ENCODE measurements at regions of chr11 and their contacts with region 1.

Region 1: GRCh38 chr11:61899146-61899841 is 7.9 kb upstream of the FADS3 start:
- DNase-seq: peak; percentile 90
- H3K4me3 ChIP-seq: no peak overlapping the region
- H3K27ac ChIP-seq: no peak overlapping the region
- H3K4me1 ChIP-seq: no peaks in the 10 kb centered on the region
- H3K27me3 ChIP-seq: no peaks in the 10 kb centered on the region
- CTCF ChIP-seq: peak; percentile 100

Region 2: DNA sequence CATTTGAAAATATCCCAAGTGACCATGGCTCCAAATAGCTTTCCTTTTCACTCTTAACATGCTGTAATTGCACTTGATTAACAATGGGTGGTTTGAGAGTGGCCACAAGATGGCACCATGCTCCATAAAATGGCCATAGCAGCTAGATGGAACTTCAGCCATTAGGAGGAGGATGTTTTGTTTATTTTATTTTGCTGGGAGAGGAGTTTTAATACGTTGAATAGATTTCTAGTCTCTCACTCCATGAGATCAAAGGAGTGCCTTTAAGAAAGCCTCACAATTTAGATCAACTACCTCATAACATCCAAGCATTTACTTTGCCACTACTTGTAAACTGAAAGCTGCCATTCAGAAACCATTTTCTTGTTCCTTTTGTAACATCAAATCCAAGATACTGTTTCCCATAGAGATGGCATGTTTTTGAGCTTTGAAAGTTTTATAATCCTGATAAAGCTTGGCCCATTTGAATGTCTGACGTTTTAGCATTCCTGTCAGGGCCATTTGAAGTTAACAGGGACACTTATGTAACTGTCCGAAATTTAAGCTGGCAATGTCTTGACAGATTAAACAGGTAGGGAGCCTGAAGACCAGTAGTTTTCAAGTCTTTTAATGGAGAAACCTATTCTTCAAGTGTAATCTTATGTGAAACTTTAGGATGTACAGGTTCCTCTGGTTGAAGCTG is 101.9 kb before region 1 on chr11:
- intact Hi-C with region 1: loop called (anchors 5 kb)
- DNase-seq: peak; percentile 82
- H3K4me3 ChIP-seq: no peak overlapping the region
- H3K27ac ChIP-seq: no peak overlapping the region
- H3K4me1 ChIP-seq: peaks cover 8% of the 10 kb centered on the region
- H3K27me3 ChIP-seq: no peaks in the 10 kb centered on the region
- CTCF ChIP-seq: peak; percentile 74

Region 3: DNA sequence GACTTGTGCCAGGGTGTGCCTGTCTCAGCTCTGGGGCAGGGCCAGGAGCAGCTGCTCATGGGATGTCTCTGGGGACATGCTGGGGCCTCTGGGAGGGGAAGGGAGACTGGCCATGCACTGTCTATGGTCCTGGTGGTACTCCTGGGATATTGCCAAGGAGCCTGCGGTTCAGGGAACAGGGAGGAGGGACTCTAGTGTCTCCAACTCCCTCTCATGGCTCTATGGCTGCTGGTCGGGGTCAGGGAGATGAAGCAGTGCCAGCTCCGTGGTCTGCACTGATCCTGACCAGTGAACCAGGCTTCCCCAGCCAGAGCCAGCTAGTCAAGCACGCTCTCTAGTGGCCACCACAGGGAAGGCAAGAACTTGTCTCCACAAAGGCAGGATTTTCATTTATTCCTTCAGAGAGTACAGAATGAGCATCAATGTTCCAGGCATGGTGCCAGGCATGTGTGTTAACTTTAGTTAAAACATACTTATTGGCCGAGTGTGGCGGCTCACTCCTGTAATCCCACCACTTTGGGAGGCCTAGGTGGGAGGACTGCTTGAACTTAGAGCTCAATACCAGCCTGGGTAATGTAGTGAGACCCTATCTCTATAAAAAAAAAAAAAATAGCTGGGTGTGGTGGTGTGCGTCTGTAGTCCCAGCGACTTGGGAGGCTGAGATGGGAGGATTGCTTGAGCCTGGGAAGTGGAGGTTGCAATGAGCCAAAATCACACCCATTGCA is 48.4 kb after region 1 on chr11:
- intact Hi-C with region 1: loop called (anchors 2 kb)
- DNase-seq: peak; percentile 86
- H3K4me3 ChIP-seq: no peak overlapping the region
- H3K27ac ChIP-seq: no peak overlapping the region
- H3K4me1 ChIP-seq: no peaks in the 10 kb centered on the region
- H3K27me3 ChIP-seq: no peaks in the 10 kb centered on the region
- CTCF ChIP-seq: peak; percentile 86

Region 4: GRCh38 chr11:62033191-62034044 is 134.1 kb after region 1 on chr11:
- intact Hi-C with region 1: no loop called
- DNase-seq: no peak
- H3K4me3 ChIP-seq: no peak overlapping the region
- H3K27ac ChIP-seq: no peak overlapping the region
- H3K4me1 ChIP-seq: no peaks in the 10 kb centered on the region
- H3K27me3 ChIP-seq: no peaks in the 10 kb centered on the region
- CTCF ChIP-seq: no peak

Region 5: DNA sequence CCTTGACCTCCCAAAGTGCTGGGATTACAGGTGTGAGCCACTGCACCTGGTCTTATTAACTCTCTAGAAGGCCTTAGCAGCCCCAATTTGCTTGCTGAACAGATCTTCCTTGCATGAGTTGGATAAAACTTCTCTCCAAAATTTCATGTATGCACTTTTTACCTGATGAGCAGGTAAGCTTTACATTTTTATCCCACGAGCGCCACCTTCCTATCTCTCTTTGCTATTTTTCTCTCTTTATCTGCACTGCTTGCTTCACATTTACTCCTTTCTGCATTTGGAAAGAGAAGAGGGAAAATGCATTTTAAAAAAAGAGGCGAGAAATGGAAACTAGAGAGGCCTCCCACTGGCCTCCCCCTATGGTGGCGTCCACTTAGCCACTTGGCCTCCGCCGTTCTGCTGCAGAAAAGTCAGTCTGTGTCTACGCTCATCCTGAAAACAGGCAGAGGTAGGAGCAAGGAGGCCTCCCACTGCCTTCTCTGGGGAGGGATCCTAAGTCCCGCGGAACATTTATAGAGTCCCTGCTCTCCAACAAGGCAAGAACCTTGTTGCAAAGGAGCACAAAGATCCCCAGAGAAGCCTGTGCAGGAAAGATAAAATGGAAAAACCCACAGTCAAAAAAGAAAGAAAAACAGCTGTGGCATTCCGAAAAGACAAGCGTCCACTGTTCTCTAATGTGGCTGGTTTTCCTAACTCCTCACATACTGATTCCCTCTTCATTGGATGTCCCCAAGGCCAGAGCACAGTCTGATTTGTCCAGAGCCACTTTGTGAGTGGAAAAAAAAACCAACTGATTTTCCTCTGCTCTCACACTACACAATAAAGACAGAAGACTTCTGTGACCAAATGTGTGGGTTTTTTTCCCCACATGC is 162.3 kb after region 1 on chr11:
- intact Hi-C with region 1: loop called (anchors 2 kb)
- DNase-seq: no peak
- H3K4me3 ChIP-seq: no peak overlapping the region
- H3K27ac ChIP-seq: no peak overlapping the region
- H3K4me1 ChIP-seq: no peaks in the 10 kb centered on the region
- H3K27me3 ChIP-seq: no peaks in the 10 kb centered on the region
- CTCF ChIP-seq: peak; percentile 31

Region 6: GRCh38 chr11:62081378-62082291 is 182.3 kb after region 1 on chr11:
- intact Hi-C with region 1: loop called (anchors 2 kb)
- DNase-seq: peak; percentile 83
- H3K4me3 ChIP-seq: no peak overlapping the region
- H3K27ac ChIP-seq: no peak overlapping the region
- H3K4me1 ChIP-seq: no peaks in the 10 kb centered on the region
- H3K27me3 ChIP-seq: no peaks in the 10 kb centered on the region
- CTCF ChIP-seq: peak; percentile 91

Measured in colonic mucosa (tissue), 4 donors.